Transverse colon (tissue), 4 donors: ENCODE measurements at regions of chr10 and their contacts with region 1.

Region 1: GRCh38 chr10:87646939-87647338 is 12.7 kb upstream of the PAPSS2 start:
- DNase-seq: no peak
- H3K4me3 ChIP-seq: no peak overlapping the region
- H3K27ac ChIP-seq: no peak overlapping the region
- H3K4me1 ChIP-seq: no peaks in the 10 kb centered on the region
- H3K27me3 ChIP-seq: no peaks in the 10 kb centered on the region
- CTCF ChIP-seq: no peak
- EP300 ChIP-seq: no peak
- POLR2A ChIP-seq: no peak

Region 2: GRCh38 chr10:87761892-87762291 is 115.0 kb after region 1 on chr10:
- in situ Hi-C with region 1: loop called in 1 of 4 experiments (anchors 10 kb)
- intact Hi-C with region 1: no loop called
- DNase-seq: no peak
- H3K4me3 ChIP-seq: no peak overlapping the region
- H3K27ac ChIP-seq: no peak overlapping the region
- H3K4me1 ChIP-seq: no peaks in the 10 kb centered on the region
- H3K27me3 ChIP-seq: no peaks in the 10 kb centered on the region
- CTCF ChIP-seq: no peak
- EP300 ChIP-seq: no peak
- POLR2A ChIP-seq: no peak